Activated T-helper 2 cell treated with anti-CD3 and anti-CD28 coated beads, Interferon-gamma antibody, Interleukin-2, Interleukin-4, amounts not matched to agents 10 μg/mL and 5 μg/mL and 100 μg/mL, durations not matched to agents 14 hours and 24 hours and 36 hours (primary cell): ENCODE measurements at regions of chr9 and their contacts with region 1.

Region 1: GRCh38 chr9:15422372-15423230 is at the start of gene SNAPC3:
- DNase-seq: peak; percentile 94
- H3K4me3 Mint-ChIP-seq: peak within 1 kb of the TSS; percentile 95
- H3K27ac Mint-ChIP-seq: peak within 1 kb of the TSS; percentile 88
- H3K4me1 Mint-ChIP-seq: peaks cover 40% of the 10 kb centered on the region
- H3K27me3 Mint-ChIP-seq: peaks cover 5% of the 10 kb centered on the region
- total RNA-seq, gene SNAPC3: 34.0 and 34.7 TPM in 2 replicates

Region 2: DNA sequence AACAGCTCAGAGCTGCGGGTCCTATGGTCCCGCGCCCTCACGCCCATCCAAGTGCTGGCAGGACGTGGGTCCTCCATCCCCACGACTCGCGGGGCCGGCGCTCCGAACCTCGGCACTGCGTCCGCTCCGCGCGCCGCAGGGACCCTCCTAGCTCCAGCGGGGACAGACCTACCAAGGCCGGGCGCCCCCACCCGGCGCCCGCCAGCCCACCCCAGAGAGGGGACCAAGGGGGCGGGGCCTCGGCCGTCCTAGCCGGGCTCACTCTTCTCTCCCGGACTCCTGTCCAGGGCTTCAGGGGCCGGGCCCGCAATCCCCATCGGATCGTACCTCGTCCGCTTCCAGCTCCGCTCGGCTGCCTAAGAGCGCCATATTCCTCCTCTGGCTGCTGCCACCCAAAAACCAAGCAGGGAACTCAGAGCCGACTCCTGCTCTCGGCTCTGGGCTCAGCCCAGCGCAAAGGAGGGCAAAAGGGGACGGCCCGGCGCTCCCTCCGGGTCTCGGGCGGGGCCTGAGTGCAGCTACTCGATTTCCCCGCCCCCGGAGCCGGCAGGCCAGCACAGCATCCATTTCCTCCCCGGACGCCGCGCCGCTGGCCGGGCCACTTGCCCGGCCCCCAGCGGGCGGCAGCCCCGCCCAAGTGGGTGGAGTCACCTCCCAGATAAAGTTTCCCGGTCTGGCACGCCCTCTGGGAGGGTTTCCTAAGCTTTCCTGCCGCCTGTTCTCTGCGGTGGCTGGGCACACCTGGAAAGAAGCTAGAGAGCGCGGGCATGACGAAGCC is 115.7 kb before region 1 on chr9 and contains the start of gene TTC39B:
- intact Hi-C with region 1: loop called (anchors 1 kb)
- DNase-seq: peak; percentile 79
- H3K4me3 Mint-ChIP-seq: peak within 1 kb of the TSS; percentile 98
- H3K27ac Mint-ChIP-seq: peak within 1 kb of the TSS; percentile 94
- H3K4me1 Mint-ChIP-seq: peaks cover 49% of the 10 kb centered on the region
- H3K27me3 Mint-ChIP-seq: no peaks in the 10 kb centered on the region
- total RNA-seq, gene TTC39B: 8.9 and 10.5 TPM in 2 replicates

Region 3: DNA sequence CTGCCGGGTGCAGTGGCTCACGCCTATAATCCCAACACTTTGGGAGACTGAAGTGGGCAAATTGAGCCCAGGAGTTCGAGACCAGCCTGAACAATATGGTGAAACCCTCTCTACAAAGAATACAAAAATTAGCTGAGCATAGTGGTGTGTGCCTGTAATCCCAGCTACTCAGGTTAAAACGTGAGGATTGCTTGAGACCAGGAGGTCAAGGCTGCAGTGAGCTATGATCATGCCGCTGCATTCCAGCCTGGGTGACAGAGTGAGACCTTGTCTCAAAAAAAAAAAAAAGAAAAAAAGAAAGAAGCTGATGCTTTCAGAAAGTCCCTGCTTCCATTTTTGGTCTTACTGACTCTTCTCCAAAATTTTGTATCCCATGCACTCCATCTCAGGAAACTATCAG is 31.4 kb after region 1 on chr9:
- intact Hi-C with region 1: no loop called
- DNase-seq: no peak
- H3K4me3 Mint-ChIP-seq: no peak overlapping the region
- H3K27ac Mint-ChIP-seq: no peak overlapping the region
- H3K4me1 Mint-ChIP-seq: no peaks in the 10 kb centered on the region
- H3K27me3 Mint-ChIP-seq: no peaks in the 10 kb centered on the region

Region 4: GRCh38 chr9:15510789-15511575 is 88.4 kb after region 1 on chr9 and contains the start of gene PSIP1:
- intact Hi-C with region 1: loop called (anchors 1 kb)
- DNase-seq: peak; percentile 87
- H3K4me3 Mint-ChIP-seq: peak within 1 kb of the TSS; percentile 90
- H3K27ac Mint-ChIP-seq: peak within 1 kb of the TSS; percentile 98
- H3K4me1 Mint-ChIP-seq: peaks cover 46% of the 10 kb centered on the region
- H3K27me3 Mint-ChIP-seq: no peaks in the 10 kb centered on the region
- total RNA-seq, gene PSIP1: 112 and 118 TPM in 2 replicates

Region 5: GRCh38 chr9:15552636-15553527 is 130.3 kb after region 1 on chr9 and contains the start of gene CCDC171:
- intact Hi-C with region 1: loop called (anchors 2 kb)
- DNase-seq: peak; percentile 84
- H3K4me3 Mint-ChIP-seq: peak within 1 kb of the TSS; percentile 87
- H3K27ac Mint-ChIP-seq: peak within 1 kb of the TSS; percentile 73
- H3K4me1 Mint-ChIP-seq: peaks cover 9% of the 10 kb centered on the region
- H3K27me3 Mint-ChIP-seq: peaks cover 14% of the 10 kb centered on the region
- total RNA-seq, gene CCDC171: 1.8 and 2.0 TPM in 2 replicates

Region 6: DNA sequence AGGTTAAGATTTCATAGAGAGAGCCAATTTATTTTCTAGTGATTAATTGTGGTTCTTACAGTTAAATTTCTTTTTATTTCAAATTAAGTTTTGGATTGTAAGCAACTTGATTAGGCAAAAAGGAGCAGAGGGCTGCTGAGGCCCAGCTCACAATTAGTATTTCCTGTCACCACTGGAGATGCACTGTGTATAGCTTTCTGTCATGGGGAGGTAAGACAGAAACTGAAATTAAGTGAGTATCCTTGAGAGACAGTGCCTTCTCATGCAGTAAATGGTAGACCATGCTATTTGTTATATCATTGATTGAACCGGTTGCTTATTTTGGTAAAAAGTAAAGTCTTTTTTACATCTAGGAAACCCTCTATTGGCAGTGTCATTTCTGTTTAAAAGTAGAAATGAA is 320.9 kb after region 1 on chr9:
- intact Hi-C with region 1: no loop called
- DNase-seq: no peak
- H3K4me3 Mint-ChIP-seq: no peak overlapping the region
- H3K27ac Mint-ChIP-seq: no peak overlapping the region
- H3K4me1 Mint-ChIP-seq: peaks cover 2% of the 10 kb centered on the region
- H3K27me3 Mint-ChIP-seq: no peaks in the 10 kb centered on the region